Activated naive CD4-positive, alpha-beta T cell treated with anti-CD3 and anti-CD28 coated beads for 36 hours (primary cell): ENCODE measurements at regions of chr12 and their contacts with region 1.

Region 1: GRCh38 chr12:122888232-122888867 is 7.6 kb downstream of the VPS37B start:
- DNase-seq: peak; percentile 72
- H3K4me3 Mint-ChIP-seq: peak overlapping the region; percentile 77
- H3K27ac Mint-ChIP-seq: peak overlapping the region; percentile 91
- H3K4me1 Mint-ChIP-seq: peaks cover 79% of the 10 kb centered on the region
- H3K27me3 Mint-ChIP-seq: peaks cover 3% of the 10 kb centered on the region

Region 2: DNA sequence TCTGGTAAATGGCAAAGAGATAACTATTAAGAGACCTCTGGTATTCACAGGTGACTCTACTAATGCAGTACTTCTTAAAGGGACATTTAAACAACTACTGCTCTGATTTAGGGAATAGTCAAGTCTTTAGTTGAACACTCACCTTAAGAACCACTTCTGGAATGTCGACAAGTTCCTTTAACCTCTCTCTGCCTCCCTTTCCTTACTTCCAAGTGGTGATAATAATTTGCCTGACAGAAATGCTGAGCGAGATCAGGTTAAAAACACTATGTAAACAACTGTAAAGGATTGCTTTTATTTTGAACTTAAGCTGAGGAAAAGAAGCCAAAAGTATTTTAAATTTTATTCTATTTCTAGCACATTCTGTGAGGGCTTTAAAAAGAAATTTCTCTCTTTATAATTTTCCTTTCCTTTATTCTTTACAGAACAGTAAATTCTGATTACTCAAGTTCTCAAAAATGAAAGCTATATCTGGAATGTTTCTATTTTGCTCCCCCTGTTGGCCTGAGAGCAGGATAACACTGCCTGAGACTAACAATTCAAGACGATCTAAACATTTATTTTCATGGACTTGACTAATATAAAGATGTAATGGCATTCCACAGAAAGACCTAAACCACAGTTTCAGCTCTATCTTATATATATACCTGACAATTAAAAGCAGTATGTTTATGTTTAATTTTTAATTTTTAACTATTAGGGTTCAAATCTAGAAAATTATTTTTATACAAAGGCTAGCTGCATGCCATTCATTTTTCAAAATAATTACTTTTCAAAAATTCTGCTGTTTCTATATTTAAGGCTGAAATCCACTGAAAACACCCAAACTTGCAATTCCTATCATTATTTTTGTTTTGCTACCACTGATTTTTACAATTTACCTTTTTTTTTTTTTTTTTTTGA is 416.8 kb before region 1 on chr12:
- CTCF ChIA-PET with region 1: no interaction called
- intact Hi-C with region 1: no loop called
- DNase-seq: peak; percentile 24
- H3K4me3 Mint-ChIP-seq: no peak overlapping the region
- H3K27ac Mint-ChIP-seq: no peak overlapping the region
- H3K4me1 Mint-ChIP-seq: peaks cover 23% of the 10 kb centered on the region
- H3K27me3 Mint-ChIP-seq: no peaks in the 10 kb centered on the region

Region 3: DNA sequence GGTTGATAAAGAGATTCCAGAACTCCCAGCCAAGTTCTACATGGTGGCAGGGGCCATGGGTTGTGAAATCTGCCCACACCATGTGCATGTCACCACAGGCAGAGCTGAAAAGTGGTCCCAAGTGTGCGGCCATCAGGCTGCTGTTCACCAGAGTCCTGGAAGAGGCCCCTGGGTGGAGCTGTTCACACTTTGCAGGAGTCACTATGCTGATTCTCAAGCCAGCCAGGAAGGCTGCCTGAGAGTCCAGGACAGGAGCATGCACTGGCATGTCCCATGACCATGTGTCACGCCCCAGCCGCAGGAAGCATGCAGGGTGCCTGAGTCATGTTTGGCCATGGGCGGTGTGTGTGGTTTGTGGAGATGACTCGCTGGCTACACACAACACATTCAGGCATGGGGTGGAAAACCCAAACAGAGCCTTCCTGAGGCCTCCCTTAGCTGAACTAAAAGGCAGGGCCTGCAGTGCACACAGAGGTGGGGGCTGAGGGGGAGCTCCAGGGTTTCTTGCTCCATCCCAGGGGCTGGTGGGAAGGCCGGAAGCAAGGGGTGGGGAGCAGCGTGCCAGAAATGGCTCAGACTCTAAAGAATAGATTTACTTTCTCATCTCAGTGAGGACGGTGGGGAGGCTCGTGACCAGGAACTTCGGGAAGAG is 58.5 kb after region 1 on chr12:
- CTCF ChIA-PET with region 1: interaction called, 54 read pairs
- intact Hi-C with region 1: loop called (anchors 2 kb)
- DNase-seq: peak; percentile 96
- H3K4me3 Mint-ChIP-seq: no peak overlapping the region
- H3K27ac Mint-ChIP-seq: peak overlapping the region; percentile 83
- H3K4me1 Mint-ChIP-seq: peaks cover 17% of the 10 kb centered on the region
- H3K27me3 Mint-ChIP-seq: no peaks in the 10 kb centered on the region

Region 4: DNA sequence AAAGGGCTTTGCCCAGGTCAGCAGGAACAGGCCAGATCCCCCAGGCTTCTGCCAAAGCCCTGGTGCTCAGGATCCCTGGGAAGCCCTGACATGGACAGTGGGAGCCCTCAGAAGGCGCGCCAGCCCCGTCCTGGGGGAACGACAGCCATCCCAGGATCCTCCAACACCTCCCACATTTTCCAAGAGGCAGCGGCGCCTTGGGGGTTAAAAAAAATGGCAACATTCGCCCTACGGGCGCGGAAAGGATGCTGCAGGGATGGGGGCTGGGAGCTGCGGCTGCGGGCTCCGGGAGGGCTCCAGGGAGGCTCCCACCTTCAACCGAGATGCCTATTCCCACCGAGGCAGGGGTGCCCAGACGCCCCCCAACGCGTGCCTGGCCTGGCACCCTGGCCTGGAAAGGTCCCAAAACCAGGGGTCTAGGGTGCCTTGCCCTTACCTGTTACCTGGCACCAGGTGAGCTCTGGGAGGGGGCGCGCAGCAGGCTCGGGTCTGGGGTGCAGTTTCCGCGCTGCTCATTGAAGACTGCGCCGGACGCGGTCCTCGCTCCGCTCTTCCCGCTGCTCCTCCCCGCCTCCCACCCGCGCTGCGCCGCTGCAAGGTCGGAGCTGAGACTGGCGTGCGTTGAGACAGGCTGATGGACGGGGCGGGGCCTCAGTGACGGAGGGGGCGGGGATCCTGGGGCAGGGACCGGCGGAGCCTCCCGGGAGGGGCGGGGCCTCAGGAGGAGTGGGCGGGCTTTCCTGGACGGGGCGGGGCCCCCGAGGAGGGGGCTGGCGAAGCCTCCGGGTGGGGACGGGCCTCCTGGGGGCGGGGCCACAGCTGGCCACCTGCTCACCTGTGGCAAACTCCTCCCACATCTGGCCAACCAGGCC is 77.7 kb after region 1 on chr12 and contains the start of gene ABCB9:
- CTCF ChIA-PET with region 1: no interaction called
- intact Hi-C with region 1: no loop called
- DNase-seq: peak; percentile 98
- H3K4me3 Mint-ChIP-seq: peak within 1 kb of the TSS; percentile 64
- H3K27ac Mint-ChIP-seq: no peak within 1 kb of the TSS
- H3K4me1 Mint-ChIP-seq: peaks cover 5% of the 10 kb centered on the region
- H3K27me3 Mint-ChIP-seq: no peaks in the 10 kb centered on the region
- total RNA-seq, gene ABCB9: 5.1 to 5.9 TPM